ENCODE measurements at regions of chr6 and their contacts with region 1.

Region 1: DNA sequence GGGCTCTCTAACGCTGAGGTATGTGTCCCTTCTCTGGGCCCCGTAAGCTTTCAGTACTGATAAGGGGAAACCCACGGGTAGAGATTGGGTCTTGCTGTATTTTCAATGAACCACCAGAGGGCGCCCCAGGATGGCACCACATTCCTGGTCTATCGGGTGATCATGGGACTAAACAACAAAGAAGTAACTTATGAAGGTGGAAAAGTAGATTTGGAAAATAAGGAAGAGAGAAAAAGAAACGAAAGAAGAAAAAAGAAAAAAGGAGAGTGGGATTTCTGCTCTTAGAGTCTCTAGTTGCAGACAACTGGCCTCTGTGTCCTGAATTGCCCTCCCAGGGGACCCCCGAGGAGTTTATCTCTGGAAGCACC is 93.8 kb downstream of the GMPR start:
- DNase-seq: peak; percentile 71
- H3K4me3 Mint-ChIP-seq: no peak overlapping the region
- H3K27ac Mint-ChIP-seq: no peak overlapping the region
- H3K4me1 Mint-ChIP-seq: peaks cover 11% of the 10 kb centered on the region
- H3K27me3 Mint-ChIP-seq: no peaks in the 10 kb centered on the region

Region 2: DNA sequence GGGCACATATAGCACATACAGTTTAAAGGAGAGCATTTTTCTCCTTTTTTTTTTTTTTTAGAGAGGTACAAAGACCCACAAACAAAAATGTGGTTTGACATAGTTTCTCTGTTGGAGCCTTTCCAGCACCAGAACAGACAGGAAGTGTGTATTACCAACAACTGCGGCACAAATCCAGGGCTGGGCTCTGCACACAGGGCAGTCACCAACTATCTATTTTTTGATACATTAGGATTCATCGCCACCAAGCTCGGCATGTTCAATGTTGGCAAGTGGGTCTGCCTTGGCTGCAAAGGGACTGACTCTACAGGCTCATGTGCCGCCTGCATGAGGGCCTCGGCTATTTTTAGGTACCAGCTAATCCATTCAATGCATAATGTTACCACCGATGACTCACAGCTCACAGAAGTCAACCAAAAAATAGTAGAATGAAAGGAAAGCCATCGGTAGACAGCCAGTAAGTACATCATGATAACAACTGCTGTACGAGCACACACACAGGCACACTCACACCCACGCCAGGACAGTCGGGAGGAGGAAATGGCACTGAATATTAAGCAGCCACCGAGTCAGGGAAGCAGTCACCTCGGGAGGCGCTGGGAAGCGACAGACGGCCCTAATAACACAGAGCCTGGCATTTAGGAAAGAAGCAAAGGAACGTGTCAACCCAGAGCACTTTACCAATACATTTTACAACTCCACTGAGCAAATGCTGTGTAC is 12.2 kb before region 1 on chr6:
- intact Hi-C with region 1: loop called (anchors 1 kb)
- DNase-seq: peak; percentile 65
- H3K4me3 Mint-ChIP-seq: peak overlapping the region; percentile 60
- H3K27ac Mint-ChIP-seq: peak overlapping the region; percentile 84
- H3K4me1 Mint-ChIP-seq: peaks cover 68% of the 10 kb centered on the region
- H3K27me3 Mint-ChIP-seq: no peaks in the 10 kb centered on the region

Region 3: DNA sequence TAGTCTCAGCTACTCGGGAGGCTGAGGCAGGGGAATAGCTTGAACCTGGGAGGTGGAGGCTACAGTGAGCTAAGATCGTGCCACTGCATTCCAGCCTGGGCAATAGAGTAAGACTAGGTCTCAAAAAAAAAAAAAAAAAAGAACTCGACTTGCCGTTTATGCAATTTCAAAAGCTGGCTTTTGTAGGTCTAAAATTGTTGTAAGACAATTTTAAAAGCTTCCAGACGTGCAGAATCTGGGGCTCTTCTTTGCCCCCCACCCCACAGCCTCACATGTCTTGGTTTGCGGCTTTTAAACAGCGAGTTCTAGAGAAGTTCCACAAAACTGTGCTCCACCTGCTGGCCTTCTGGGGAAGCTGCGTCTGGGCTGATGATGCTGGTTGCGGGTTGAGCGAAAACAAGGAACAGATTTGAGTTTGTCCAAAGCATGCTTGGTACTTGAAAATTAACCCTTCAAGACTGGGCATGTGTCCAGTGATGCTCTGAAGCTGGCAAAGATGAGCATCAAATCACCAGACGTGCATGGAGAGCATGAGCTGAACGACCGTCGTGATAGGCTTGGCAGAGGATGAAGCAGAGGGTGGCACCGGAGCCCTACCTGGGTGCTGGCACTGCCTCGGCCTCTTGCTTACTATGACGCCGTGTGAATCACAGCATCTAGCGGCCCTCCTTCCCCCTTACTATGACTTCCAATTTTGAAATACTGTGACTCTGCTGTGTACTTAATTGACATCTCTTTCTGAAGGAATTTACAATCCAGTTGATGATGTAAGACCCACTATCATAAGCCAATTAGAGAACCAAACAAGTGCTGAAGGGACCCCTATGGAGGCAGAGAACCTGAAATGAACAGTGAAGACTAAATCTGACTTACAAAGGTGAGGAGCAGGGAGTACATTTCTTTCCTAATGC is 77.6 kb after region 1 on chr6:
- intact Hi-C with region 1: loop called (anchors 1 kb)
- DNase-seq: peak; percentile 26
- H3K4me3 Mint-ChIP-seq: no peak overlapping the region
- H3K27ac Mint-ChIP-seq: peak overlapping the region; percentile 62
- H3K4me1 Mint-ChIP-seq: peaks cover 54% of the 10 kb centered on the region
- H3K27me3 Mint-ChIP-seq: no peaks in the 10 kb centered on the region

Region 4: GRCh38 chr6:16420715-16421461 is 88.7 kb after region 1 on chr6:
- intact Hi-C with region 1: loop called (anchors 2 kb)
- DNase-seq: peak; percentile 48
- H3K4me3 Mint-ChIP-seq: peak overlapping the region; percentile 72
- H3K27ac Mint-ChIP-seq: peak overlapping the region; percentile 98
- H3K4me1 Mint-ChIP-seq: peaks cover 54% of the 10 kb centered on the region
- H3K27me3 Mint-ChIP-seq: no peaks in the 10 kb centered on the region

Region 5: DNA sequence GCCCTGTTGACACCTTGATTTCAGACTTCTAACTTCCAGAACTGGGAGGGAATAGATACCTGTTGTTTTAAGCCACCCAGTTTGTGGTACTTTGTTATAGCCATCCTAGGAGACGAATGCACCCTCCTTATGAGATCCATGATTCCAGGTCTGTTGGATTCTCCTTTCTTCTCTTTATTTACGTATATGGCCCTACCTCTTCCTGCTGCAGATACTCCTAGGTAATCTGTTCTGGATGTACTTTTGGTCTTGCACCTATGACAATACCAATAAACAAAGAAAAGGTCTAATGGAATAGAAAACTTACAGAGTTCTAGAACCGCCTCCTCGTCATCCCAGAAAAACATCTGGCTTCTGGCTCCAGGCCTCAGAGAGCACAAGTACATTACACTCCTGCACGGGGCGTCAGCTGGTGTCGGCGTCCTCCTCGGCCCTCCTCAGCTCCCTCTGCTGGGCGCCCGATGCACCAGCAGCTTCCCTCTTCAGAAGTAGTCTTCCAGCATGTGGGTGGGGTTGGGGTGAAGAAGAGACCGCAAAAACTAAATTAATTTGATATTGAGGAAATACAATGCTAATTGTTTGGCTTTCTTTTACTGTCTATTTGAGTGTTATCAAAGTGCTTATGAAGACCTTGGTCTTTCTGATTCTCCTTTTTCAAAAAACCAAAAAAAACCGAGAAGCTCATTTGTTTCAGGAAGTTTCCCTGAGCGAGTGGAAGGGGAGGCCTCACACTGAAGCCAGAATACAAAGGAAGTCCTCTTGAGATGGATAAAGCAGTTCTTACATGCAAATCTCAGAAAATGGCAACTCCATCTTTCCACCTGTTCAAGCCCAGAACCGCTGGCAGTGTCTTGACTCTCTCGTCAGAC is 438.8 kb after region 1 on chr6:
- intact Hi-C with region 1: loop called (anchors 1 kb)
- DNase-seq: peak; percentile 65
- H3K4me3 Mint-ChIP-seq: no peak overlapping the region
- H3K27ac Mint-ChIP-seq: no peak overlapping the region
- H3K4me1 Mint-ChIP-seq: peaks cover 46% of the 10 kb centered on the region
- H3K27me3 Mint-ChIP-seq: peaks cover 2% of the 10 kb centered on the region

Region 6: GRCh38 chr6:16964553-16965501 is 632.7 kb after region 1 on chr6:
- intact Hi-C with region 1: loop called (anchors 2 kb)
- DNase-seq: peak; percentile 47
- H3K4me3 Mint-ChIP-seq: no peak overlapping the region
- H3K27ac Mint-ChIP-seq: no peak overlapping the region
- H3K4me1 Mint-ChIP-seq: peaks cover 18% of the 10 kb centered on the region
- H3K27me3 Mint-ChIP-seq: peaks cover 30% of the 10 kb centered on the region